ENCODE measurements at regions of chr2 and their contacts with region 1.

Region 1: GRCh38 chr2:168346725-168347477 is 99.5 kb upstream of the STK39 start:
- DNase-seq: peak; percentile 81
- H3K4me3 Mint-ChIP-seq: peak overlapping the region; percentile 76
- H3K27ac Mint-ChIP-seq: no peak overlapping the region
- H3K4me1 Mint-ChIP-seq: peaks cover 8% of the 10 kb centered on the region
- H3K27me3 Mint-ChIP-seq: peaks cover 26% of the 10 kb centered on the region

Region 2: DNA sequence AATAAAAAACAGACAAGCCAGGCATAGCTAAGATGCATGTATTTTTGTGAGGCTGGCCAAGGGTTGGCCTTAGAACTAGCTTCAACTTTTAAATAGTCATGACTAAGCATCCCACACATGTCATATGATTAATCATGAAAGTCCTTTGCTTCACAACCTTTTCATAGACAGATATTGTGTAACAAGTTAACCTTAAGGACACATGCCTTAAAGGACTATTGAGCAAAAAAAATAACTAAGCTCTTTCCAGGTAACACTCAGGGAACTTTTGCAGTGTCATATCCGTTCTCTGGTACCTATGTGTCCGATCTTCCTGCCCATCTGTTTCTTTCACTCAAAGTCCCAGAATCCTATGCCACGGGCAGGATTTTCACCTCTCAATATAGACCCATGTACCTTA is 597.9 kb before region 1 on chr2:
- CTCF ChIA-PET with region 1: no interaction called
- DNase-seq: no peak
- H3K4me3 Mint-ChIP-seq: no peak overlapping the region
- H3K27ac Mint-ChIP-seq: no peak overlapping the region
- H3K4me1 Mint-ChIP-seq: no peaks in the 10 kb centered on the region
- H3K27me3 Mint-ChIP-seq: no peaks in the 10 kb centered on the region

Region 3: DNA sequence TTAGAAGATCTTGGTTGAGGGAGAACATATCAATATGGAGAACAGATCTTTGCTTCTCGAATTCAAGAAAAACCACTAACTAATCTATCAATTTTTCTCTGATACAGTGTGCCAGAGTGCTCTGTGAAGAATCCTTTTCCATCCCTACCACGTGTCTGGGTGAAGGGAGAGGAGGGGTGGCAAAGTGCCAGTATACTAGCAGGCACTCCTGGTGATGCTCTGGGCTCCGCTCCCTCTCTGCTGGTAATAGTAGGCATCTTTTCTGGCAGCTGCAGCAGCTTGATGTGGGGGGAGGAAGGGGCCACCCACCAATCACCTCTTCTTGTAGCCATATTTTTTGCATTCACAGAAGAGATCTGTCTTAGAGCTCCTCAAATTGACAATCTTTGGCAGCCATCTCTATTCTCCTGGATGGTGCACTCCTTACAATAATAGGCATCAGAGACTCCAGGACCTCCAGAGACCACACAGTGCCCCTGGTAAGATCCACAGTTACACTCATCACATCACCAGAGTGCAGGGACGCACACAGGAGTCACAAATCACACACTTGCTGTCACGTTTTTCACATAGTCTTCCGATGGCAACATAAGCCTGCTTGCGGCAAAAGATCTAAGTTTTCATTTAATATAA is 115.2 kb before region 1 on chr2:
- CTCF ChIA-PET with region 1: no interaction called
- DNase-seq: no peak
- H3K4me3 Mint-ChIP-seq: no peak overlapping the region
- H3K27ac Mint-ChIP-seq: no peak overlapping the region
- H3K4me1 Mint-ChIP-seq: peaks cover 15% of the 10 kb centered on the region
- H3K27me3 Mint-ChIP-seq: no peaks in the 10 kb centered on the region

Region 4: GRCh38 chr2:168357797-168358472 is 11.0 kb after region 1 on chr2:
- CTCF ChIA-PET with region 1: interaction called, 10 read pairs
- DNase-seq: no peak
- H3K4me3 Mint-ChIP-seq: no peak overlapping the region
- H3K27ac Mint-ChIP-seq: no peak overlapping the region
- H3K4me1 Mint-ChIP-seq: peaks cover 27% of the 10 kb centered on the region
- H3K27me3 Mint-ChIP-seq: peaks cover 4% of the 10 kb centered on the region

Region 5: GRCh38 chr2:168687314-168687713 is 340.4 kb after region 1 on chr2:
- CTCF ChIA-PET with region 1: interaction called, 22 read pairs
- DNase-seq: peak; percentile 40
- H3K4me3 Mint-ChIP-seq: no peak overlapping the region
- H3K27ac Mint-ChIP-seq: no peak overlapping the region
- H3K4me1 Mint-ChIP-seq: peaks cover 4% of the 10 kb centered on the region
- H3K27me3 Mint-ChIP-seq: no peaks in the 10 kb centered on the region

Region 6: GRCh38 chr2:168705534-168706470 is 358.9 kb after region 1 on chr2:
- CTCF ChIA-PET with region 1: interaction called, 13 read pairs
- DNase-seq: no peak
- H3K4me3 Mint-ChIP-seq: no peak overlapping the region
- H3K27ac Mint-ChIP-seq: no peak overlapping the region
- H3K4me1 Mint-ChIP-seq: no peaks in the 10 kb centered on the region
- H3K27me3 Mint-ChIP-seq: no peaks in the 10 kb centered on the region

Region 7: GRCh38 chr2:168758970-168759820 is 412.3 kb after region 1 on chr2:
- CTCF ChIA-PET with region 1: interaction called, 18 read pairs
- DNase-seq: peak; percentile 28
- H3K4me3 Mint-ChIP-seq: no peak overlapping the region
- H3K27ac Mint-ChIP-seq: no peak overlapping the region
- H3K4me1 Mint-ChIP-seq: peaks cover 34% of the 10 kb centered on the region
- H3K27me3 Mint-ChIP-seq: no peaks in the 10 kb centered on the region

Region 8: DNA sequence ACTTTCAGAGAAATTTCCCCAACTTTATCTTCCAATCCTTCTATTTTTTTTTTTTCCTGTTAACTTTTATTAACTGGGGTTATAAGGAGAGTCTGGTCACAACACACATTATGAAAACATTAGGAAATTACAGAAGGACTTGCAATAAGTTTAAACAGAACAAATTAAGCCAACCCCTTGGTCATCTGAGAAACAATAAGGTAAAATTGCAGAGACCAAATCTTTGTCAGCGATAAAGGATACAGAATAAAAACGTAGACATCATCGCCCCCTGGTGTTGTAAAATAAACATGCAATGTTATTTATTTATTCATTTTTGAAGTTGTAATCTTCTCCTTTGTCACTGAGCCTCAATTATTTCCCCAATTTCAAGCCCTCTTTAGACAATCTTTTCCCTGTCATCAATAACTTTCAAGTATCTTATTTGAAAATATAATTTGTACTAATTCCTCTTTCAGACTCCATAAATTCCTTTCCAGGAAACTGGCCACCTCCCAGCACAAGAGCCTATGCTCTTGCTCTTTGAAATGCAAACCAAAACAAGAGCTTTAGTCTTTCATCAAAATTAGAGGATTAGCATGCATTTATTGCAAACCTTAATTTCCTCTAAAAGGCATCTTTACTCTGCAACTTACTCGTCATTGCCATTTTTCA is 573.7 kb after region 1 on chr2:
- CTCF ChIA-PET with region 1: interaction called, 14 read pairs
- DNase-seq: no peak
- H3K4me3 Mint-ChIP-seq: no peak overlapping the region
- H3K27ac Mint-ChIP-seq: no peak overlapping the region
- H3K4me1 Mint-ChIP-seq: peaks cover 11% of the 10 kb centered on the region
- H3K27me3 Mint-ChIP-seq: peaks cover 35% of the 10 kb centered on the region